ENCODE measurements at regions of chr5 and their contacts with region 1.

Region 1: GRCh38 chr5:84255315-84255714 is 129.4 kb downstream of the EDIL3 start:
- DNase-seq: no peak
- ATAC-seq: no peak
- H3K4me3 ChIP-seq: no peak overlapping the region
- H3K27ac ChIP-seq: no peak overlapping the region
- H3K4me1 ChIP-seq: no peaks in the 10 kb centered on the region
- H3K27me3 ChIP-seq: no peaks in the 10 kb centered on the region

Region 2: DNA sequence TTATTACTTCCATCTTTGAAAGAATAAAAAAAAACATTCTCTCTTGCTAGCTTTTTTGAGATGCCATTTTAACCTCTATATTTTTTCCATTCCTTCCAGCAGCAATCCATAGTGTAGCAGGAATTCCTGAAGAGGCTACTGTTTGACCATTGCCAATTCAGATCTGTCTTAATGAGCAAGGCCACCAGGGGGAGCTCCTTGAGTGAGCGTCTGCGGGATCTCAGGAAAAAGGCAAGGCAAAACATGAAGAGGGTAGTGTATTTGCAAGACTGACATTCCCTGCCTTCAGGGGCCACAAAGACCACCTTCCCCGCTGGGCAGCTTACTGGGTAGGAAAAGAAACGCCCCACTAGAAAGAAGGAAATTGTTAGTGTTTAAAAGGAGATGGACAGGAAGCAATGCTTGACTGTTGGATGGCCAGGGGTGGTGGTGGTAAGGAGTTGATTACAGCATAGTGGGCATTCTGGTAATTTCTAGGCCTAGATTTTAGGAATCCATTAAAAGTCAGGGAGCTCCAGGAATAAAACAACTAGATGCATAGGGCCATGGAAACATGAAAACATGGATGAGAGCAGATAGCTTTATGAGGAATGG is 328.1 kb before region 1 on chr5:
- intact Hi-C with region 1: loop called in 1 of 2 experiments (anchors 10 kb)
- DNase-seq: peak; percentile 58 to 80
- ATAC-seq: no peak
- H3K4me3 ChIP-seq: no peak overlapping the region
- H3K27ac ChIP-seq: no peak overlapping the region
- H3K4me1 ChIP-seq: no peaks in the 10 kb centered on the region
- H3K27me3 ChIP-seq: no peaks in the 10 kb centered on the region

Region 3: GRCh38 chr5:84634256-84634655 is 378.9 kb after region 1 on chr5:
- intact Hi-C with region 1: no loop called
- DNase-seq: peak in 1 of 2 donors; percentile 55
- ATAC-seq: peak; percentile 23
- H3K4me3 ChIP-seq: no peak overlapping the region
- H3K27ac ChIP-seq: no peak overlapping the region
- H3K4me1 ChIP-seq: no peaks in the 10 kb centered on the region
- H3K27me3 ChIP-seq: no peaks in the 10 kb centered on the region